GM12878 (cell line): ENCODE measurements at regions of chr1 and their contacts with region 1.

Region 1: GRCh38 chr1:31789259-31790065 is 25.3 kb upstream of the ADGRB2 start:
- DNase-seq: peak; percentile 39
- ATAC-seq: peak; percentile 88
- H3K4me3 ChIP-seq: peak overlapping the region; percentile 79; the same call in 1 of the 2 replicates
- H3K27ac ChIP-seq: no peak overlapping the region
- H3K4me1 ChIP-seq: peaks cover 19% of the 10 kb centered on the region
- H3K27me3 ChIP-seq: no peaks in the 10 kb centered on the region; a peak in 1 of 4 replicates
- CTCF ChIP-seq: peak; percentile 86 to 98 (median 98)
- EP300 ChIP-seq: no peak; a peak in 1 of 4 replicates
- POLR2A ChIP-seq: no peak
- RAD21 ChIP-seq: peak; percentile 98

Region 2: DNA sequence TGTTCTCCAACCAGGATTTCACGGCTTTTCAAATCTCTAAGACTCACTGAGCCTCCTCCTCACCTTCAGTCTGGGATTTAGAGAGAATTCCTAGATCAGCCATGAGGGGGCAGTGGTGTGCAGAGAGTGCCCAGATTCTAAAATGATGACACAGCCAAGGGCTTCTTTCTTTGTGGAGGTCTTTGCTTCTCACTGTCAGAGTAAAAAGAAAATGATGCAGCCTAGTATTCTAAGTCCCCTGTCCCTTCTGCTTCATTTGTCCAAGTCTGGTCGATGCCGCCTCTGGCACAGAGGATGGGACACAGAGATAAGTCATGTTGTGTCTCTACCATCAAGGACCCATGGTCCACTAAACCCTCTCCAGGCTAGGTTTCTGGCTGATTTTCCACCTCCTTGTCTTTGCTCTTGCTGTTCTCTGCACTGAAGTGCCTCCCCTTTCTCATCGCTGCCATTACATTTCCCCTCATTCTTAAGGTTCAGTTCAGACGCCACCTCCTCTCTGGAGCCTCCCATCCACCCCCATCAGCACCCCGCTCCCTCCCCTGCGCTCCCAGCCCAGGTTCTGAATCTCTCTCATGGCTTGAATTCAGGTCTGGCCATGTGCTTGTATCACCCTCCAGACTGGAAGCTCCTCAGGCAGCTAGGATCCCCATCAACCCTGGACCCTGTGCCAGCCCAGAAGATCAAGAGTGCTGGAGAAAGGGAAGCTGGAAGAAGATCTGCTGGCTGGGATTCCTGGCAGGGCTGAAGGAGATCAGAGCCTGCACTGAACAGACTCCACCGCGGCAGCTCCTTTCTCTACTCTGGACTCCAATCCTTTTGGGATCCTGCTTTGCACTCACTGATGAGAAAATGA is 225.1 kb before region 1 on chr1:
- CTCF ChIA-PET with region 1: interaction called, 19 read pairs
- POLR2A ChIA-PET with region 1: no interaction called
- RAD21 ChIA-PET with region 1: interaction called, 16 read pairs
- SMC1A ChIA-PET with region 1: interaction called, 7 read pairs
- in situ Hi-C with region 1: no loop called
- intact Hi-C with region 1: loop called (anchors 2 kb)
- DNase-seq: no peak
- ATAC-seq: peak; percentile 91
- H3K4me3 ChIP-seq: no peak overlapping the region
- H3K27ac ChIP-seq: no peak overlapping the region
- H3K4me1 ChIP-seq: no peaks in the 10 kb centered on the region
- H3K27me3 ChIP-seq: no peaks in the 10 kb centered on the region
- CTCF ChIP-seq: peak; percentile 82 to 86 (median 83)
- EP300 ChIP-seq: no peak
- POLR2A ChIP-seq: no peak
- RAD21 ChIP-seq: peak; percentile 95

Region 3: GRCh38 chr1:31679676-31680230 is 109.7 kb before region 1 on chr1:
- CTCF ChIA-PET with region 1: interaction called, 12 read pairs
- POLR2A ChIA-PET with region 1: no interaction called
- RAD21 ChIA-PET with region 1: interaction called, 3 read pairs
- SMC1A ChIA-PET with region 1: no interaction called
- in situ Hi-C with region 1: no loop called
- intact Hi-C with region 1: no loop called
- DNase-seq: no peak
- ATAC-seq: no peak
- H3K4me3 ChIP-seq: no peak overlapping the region
- H3K27ac ChIP-seq: no peak overlapping the region
- H3K4me1 ChIP-seq: no peaks in the 10 kb centered on the region
- H3K27me3 ChIP-seq: peaks cover under 1% of the 10 kb centered on the region in 2 experiments; a peak in 3 of 4 replicates
- CTCF ChIP-seq: no peak
- EP300 ChIP-seq: no peak
- POLR2A ChIP-seq: no peak
- RAD21 ChIP-seq: no peak

Region 4: GRCh38 chr1:31715087-31715872 is 74.2 kb before region 1 on chr1:
- CTCF ChIA-PET with region 1: interaction called, 31 read pairs
- POLR2A ChIA-PET with region 1: interaction called, 3 read pairs
- RAD21 ChIA-PET with region 1: interaction called, 17 read pairs
- SMC1A ChIA-PET with region 1: interaction called, 10 read pairs
- in situ Hi-C with region 1: no loop called
- intact Hi-C with region 1: loop called (anchors 1 kb)
- DNase-seq: no peak
- ATAC-seq: peak; percentile 98
- H3K4me3 ChIP-seq: peak overlapping the region; percentile 38; the same call in 1 of the 2 replicates
- H3K27ac ChIP-seq: no peak overlapping the region
- H3K4me1 ChIP-seq: peaks cover 4% of the 10 kb centered on the region; the same call in 1 of the 2 replicates
- H3K27me3 ChIP-seq: peaks cover 0 to 6% of the 10 kb centered on the region in 2 experiments; a peak in 1 of 4 replicates
- CTCF ChIP-seq: peak; percentile 54 to 82 (median 64)
- EP300 ChIP-seq: no peak
- POLR2A ChIP-seq: no peak
- RAD21 ChIP-seq: no peak

Region 5: GRCh38 chr1:31750858-31751510 is 38.5 kb before region 1 on chr1:
- CTCF ChIA-PET with region 1: interaction called, 19 read pairs
- POLR2A ChIA-PET with region 1: no interaction called
- RAD21 ChIA-PET with region 1: interaction called, 15 read pairs
- SMC1A ChIA-PET with region 1: interaction called, 10 read pairs
- in situ Hi-C with region 1: no loop called
- intact Hi-C with region 1: no loop called
- DNase-seq: no peak
- ATAC-seq: peak; percentile 82
- H3K4me3 ChIP-seq: no peak overlapping the region
- H3K27ac ChIP-seq: no peak overlapping the region
- H3K4me1 ChIP-seq: peaks cover 7% of the 10 kb centered on the region; the same call in 1 of the 2 replicates
- H3K27me3 ChIP-seq: peaks cover 0 to 5% of the 10 kb centered on the region in 2 experiments; a peak in 1 of 4 replicates
- CTCF ChIP-seq: no peak
- EP300 ChIP-seq: no peak
- POLR2A ChIP-seq: no peak
- RAD21 ChIP-seq: no peak

Region 6: DNA sequence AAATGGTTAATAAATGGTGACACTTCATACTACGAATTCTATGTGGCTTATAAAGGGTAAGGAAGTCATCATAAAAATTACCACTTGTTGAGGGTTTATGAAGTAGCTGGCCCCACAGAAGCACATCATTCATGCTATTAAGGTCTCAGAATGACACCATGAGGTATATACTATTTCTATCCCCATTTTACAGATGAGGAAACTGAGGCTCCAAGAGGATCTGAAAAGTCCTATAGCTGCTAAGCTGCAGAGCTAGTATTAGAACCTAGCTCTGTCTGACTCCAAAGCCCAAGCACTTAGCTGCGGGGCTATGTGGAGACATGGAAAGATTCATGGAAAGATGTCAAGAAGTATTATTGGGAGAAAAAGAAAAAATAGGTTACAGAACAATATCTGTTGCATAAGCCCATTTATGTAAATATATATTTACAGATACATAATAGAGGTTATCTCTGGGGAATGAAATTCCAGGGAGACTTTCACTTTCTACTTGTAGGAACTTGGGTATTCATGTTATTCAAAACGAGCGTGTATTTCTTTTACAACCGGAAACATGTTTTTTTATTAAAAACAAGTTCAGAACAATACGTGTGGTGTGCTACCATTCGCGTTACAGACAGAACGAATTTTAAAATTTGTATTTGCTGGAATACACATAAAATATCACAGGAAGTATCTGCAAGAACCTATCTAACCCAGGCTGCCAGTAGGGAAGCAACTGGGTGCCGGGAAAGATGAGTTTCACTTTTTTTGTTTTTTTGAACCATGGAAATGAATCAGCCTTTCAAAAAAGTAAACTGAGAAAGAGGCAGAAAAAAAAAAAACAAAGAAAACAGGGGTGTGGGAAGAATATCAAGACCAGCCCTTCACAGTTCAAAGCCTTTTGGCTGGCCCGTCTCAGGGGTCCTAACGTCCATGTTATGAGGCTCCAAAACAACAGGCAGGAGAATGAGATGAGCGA is 13.0 kb after region 1 on chr1:
- CTCF ChIA-PET with region 1: interaction called, 27 read pairs
- POLR2A ChIA-PET with region 1: no interaction called
- RAD21 ChIA-PET with region 1: interaction called, 3 read pairs
- SMC1A ChIA-PET with region 1: interaction called, 12 read pairs
- in situ Hi-C with region 1: no loop called
- intact Hi-C with region 1: no loop called
- DNase-seq: no peak
- ATAC-seq: no peak
- H3K4me3 ChIP-seq: no peak overlapping the region
- H3K27ac ChIP-seq: no peak overlapping the region
- H3K4me1 ChIP-seq: no peaks in the 10 kb centered on the region
- H3K27me3 ChIP-seq: peaks cover 0 to 4% of the 10 kb centered on the region in 2 experiments
- CTCF ChIP-seq: no peak
- EP300 ChIP-seq: no peak
- POLR2A ChIP-seq: no peak
- RAD21 ChIP-seq: no peak

Region 7: DNA sequence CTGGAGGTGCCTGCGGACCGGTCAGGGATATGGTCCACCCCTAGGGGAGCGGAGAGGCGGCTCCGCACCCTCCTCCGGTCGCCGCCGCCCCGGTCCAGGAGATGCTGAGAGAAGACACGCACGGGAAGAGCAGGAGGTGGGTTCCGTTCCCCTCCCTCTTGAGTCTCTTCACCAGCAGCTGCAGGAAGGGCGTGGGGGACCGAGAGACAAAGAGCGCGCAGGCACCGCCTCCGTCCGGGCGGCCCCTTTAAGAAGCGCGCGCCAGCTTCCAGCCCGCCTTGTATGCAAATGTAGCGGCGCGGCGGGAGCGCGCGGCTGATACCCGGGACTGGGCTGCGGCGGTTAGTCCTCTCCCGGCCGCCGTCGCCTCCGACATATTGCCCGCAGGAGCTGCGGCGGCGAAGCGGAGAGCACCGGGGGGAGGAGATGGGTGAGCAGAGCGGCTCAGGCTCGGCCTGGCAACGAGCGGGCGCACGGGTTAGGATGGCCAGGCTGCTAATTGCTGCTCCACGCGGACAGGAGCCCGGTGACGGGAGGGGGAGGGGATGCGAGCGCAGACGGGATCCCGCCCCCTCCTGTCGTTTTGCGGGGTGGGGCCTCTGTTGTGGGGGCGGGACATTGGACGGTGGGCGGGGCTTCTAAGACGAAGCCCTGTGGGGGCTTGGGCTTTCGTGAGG is 283.3 kb after region 1 on chr1 and contains the start of gene TMEM39B:
- CTCF ChIA-PET with region 1: no interaction called
- POLR2A ChIA-PET with region 1: interaction called, 4 read pairs
- RAD21 ChIA-PET with region 1: interaction called, 10 read pairs
- SMC1A ChIA-PET with region 1: no interaction called
- in situ Hi-C with region 1: no loop called
- intact Hi-C with region 1: no loop called
- DNase-seq: peak; percentile 72
- ATAC-seq: peak; percentile 92
- H3K4me3 ChIP-seq: peak within 1 kb of the TSS; percentile 92
- H3K27ac ChIP-seq: peak within 1 kb of the TSS; percentile 70
- H3K4me1 ChIP-seq: peaks cover 13% of the 10 kb centered on the region
- H3K27me3 ChIP-seq: no peaks in the 10 kb centered on the region
- CTCF ChIP-seq: no peak
- EP300 ChIP-seq: peak in 1 of 2 experiments; percentile 45; a peak in 2 of 4 replicates
- POLR2A ChIP-seq: peak; percentile 96
- RAD21 ChIP-seq: no peak
- polyA plus RNA-seq, gene TMEM39B: 2.3 to 3.4 TPM